ENCODE measurements at regions of chr4 and their contacts with region 1.

Region 1: DNA sequence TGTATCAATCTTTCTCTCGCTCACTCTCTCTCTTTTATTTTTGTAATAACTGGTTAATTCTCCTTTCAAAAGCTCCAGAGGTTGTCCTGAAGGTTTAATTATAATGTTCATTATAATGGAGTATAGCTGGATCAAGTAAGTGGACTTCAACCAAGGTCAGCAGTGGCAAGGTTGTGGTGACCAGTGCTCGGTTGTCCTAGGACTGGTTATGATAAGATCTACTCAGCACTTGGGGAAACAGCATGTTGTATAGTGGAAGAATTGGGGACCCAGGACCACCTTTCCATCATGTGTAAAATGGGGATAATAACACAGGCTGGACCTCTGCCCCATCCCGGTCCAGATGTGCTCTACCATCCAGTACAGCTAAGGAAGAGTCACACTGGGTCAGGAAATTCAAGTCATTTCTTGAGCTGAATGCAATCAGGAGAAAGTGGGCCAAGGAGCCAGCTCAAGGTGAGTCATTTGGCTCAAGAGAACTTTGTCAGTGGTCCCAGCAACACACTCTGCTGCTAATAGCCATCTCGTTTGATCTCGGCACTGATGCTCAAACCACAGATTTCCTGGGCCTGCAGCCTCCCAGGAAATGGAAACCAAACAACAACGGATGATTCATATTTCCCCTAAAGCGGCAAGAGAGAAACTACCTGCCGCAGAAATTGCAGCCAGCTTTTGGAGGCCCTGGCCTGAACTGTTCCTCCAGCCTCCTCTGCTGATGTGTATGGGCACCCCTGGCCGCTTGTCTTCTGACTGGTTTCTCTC is 123.6 kb upstream of the RBPJ start:
- DNase-seq: peak; percentile 83
- H3K4me3 Mint-ChIP-seq: peak overlapping the region; percentile 62
- H3K27ac Mint-ChIP-seq: peak overlapping the region; percentile 91
- H3K4me1 Mint-ChIP-seq: peaks cover 70% of the 10 kb centered on the region
- H3K27me3 Mint-ChIP-seq: no peaks in the 10 kb centered on the region

Region 2: GRCh38 chr4:26028793-26029567 is 168.2 kb before region 1 on chr4:
- intact Hi-C with region 1: loop called (anchors 2 kb)
- DNase-seq: peak; percentile 59
- H3K4me3 Mint-ChIP-seq: no peak overlapping the region
- H3K27ac Mint-ChIP-seq: peak overlapping the region; percentile 67
- H3K4me1 Mint-ChIP-seq: peaks cover 25% of the 10 kb centered on the region
- H3K27me3 Mint-ChIP-seq: peaks cover 2% of the 10 kb centered on the region

Region 3: DNA sequence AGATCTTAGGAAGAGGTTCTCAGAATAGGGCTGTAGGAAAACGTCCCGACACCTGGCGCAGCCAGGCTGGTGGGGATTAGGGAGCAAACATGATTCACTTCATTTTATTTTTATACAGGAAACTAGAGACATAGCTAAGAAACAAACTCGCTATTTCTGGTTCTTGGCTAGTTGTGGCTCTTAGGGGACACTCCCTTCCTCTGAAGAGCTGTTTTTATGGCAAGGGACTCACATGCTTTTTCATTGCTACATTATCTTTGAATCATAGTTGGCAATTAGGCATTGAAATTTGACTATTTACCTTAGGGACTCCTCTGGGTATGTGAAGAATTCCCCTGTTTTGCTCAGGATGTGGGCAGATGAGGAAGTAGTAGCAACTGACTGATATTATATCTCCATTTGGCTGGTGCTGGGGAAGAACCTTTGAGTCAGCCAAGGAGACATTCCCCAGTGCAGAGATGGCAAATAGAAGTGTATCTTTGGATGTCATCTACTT is 108.7 kb before region 1 on chr4:
- intact Hi-C with region 1: loop called (anchors 2 kb)
- DNase-seq: no peak
- H3K4me3 Mint-ChIP-seq: peak overlapping the region; percentile 55
- H3K27ac Mint-ChIP-seq: peak overlapping the region; percentile 94
- H3K4me1 Mint-ChIP-seq: peaks cover 70% of the 10 kb centered on the region
- H3K27me3 Mint-ChIP-seq: no peaks in the 10 kb centered on the region

Region 4: GRCh38 chr4:26139310-26139924 is 57.8 kb before region 1 on chr4:
- intact Hi-C with region 1: no loop called
- DNase-seq: no peak
- H3K4me3 Mint-ChIP-seq: no peak overlapping the region
- H3K27ac Mint-ChIP-seq: peak overlapping the region; percentile 83
- H3K4me1 Mint-ChIP-seq: peaks cover 69% of the 10 kb centered on the region
- H3K27me3 Mint-ChIP-seq: no peaks in the 10 kb centered on the region

Region 5: GRCh38 chr4:26150948-26151347 is 46.3 kb before region 1 on chr4:
- intact Hi-C with region 1: loop called (anchors 1 kb)
- DNase-seq: no peak
- H3K4me3 Mint-ChIP-seq: no peak overlapping the region
- H3K27ac Mint-ChIP-seq: peak overlapping the region; percentile 95
- H3K4me1 Mint-ChIP-seq: peaks cover 85% of the 10 kb centered on the region
- H3K27me3 Mint-ChIP-seq: no peaks in the 10 kb centered on the region

Region 6: DNA sequence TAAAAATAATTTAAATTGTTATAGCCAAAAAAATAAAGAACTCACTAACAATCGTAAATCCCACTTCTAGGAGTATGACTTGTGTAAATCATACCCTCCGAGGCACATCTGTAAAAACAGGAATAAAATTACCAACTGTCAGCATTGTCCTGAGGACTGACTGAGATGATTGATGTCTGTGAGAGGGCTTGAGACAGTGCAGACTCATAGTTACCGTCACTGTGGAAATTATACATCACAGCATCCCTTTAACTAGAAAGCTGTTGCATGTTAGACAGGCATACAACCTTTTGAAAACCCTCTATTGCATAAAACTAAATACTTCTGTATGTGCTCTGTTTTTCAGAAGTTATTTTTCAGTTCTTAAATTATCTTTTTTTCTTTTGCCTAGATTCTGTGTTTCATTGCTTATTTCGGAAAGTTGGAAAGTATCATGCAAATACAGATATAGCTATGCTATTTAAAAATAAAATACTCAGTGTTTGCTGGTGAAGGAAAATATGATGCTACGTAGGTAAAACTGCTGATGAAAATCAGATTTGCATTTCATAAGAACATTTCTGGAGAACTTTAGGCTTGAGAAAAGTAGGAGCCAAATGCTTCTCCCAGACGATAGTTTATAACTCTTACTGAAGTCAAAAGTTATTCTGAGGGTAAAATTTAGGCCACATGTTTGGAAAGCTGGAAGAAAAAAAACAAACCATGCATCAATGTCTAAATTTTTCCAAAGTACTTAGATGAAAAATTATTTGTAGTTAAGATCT is 110.0 kb after region 1 on chr4:
- intact Hi-C with region 1: loop called (anchors 1 kb)
- DNase-seq: no peak
- H3K4me3 Mint-ChIP-seq: peak overlapping the region; percentile 2
- H3K27ac Mint-ChIP-seq: peak overlapping the region; percentile 91
- H3K4me1 Mint-ChIP-seq: peaks cover 43% of the 10 kb centered on the region
- H3K27me3 Mint-ChIP-seq: no peaks in the 10 kb centered on the region

Measured in activated T-helper 2 cell treated with anti-CD3 and anti-CD28 coated beads, Interferon-gamma antibody, Interleukin-2, Interleukin-4, amounts not matched to agents 10 μg/mL and 5 μg/mL and 100 μg/mL, durations not matched to agents 14 hours and 24 hours and 36 hours (primary cell).